ENCODE measurements at regions of chr1 and their contacts with region 1.

Region 1: GRCh38 chr1:167220537-167221125 is at the start of gene POU2F1:
- DNase-seq: peak; percentile 99
- H3K4me3 Mint-ChIP-seq: peak within 1 kb of the TSS; percentile 99
- H3K27ac Mint-ChIP-seq: peak within 1 kb of the TSS; percentile 99
- H3K4me1 Mint-ChIP-seq: peaks cover 37% of the 10 kb centered on the region
- H3K27me3 Mint-ChIP-seq: peaks cover 2% of the 10 kb centered on the region
- total RNA-seq, gene POU2F1: 17.6 to 19.4 TPM

Region 2: DNA sequence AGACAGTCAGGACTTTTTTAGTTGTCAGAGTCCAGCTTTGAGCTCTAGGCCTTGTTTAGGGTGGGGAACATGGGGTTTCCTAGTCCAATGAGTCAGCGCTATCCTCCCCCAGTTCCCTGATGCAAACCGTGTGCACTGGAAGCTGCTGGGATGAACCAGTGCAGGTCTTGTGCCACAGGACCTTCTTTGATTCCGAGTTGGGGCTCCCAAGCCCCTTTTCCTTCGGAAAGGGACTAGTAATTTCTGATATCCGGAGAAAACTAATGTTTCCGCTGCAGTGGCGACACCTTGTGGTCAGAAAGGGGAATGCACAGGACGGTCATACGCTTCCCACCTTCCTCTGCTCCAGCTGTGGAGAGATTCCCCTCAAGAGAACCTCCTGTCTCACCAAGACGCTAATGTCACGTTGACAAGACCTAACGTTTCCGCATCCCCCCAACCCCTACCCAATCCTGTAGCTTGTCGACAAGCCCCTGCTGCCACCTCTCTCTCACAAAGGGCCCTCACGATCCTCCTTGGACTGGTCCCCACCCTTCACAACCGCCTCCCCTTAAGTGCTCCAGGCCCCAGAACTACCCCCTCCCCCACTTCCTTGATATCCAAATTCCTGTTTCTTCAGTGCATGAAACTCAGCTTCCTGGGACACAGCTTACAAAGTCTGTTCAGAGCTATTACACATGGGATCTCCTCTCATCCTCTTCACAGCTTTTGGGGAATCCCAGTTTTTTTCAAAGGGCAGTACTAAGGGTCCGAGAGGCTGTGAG is 161.4 kb before region 1 on chr1:
- CTCF ChIA-PET with region 1: interaction called, 11 read pairs
- intact Hi-C with region 1: no loop called
- DNase-seq: peak; percentile 89
- H3K4me3 Mint-ChIP-seq: no peak overlapping the region
- H3K27ac Mint-ChIP-seq: peak overlapping the region; percentile 38
- H3K4me1 Mint-ChIP-seq: peaks cover 11% of the 10 kb centered on the region
- H3K27me3 Mint-ChIP-seq: no peaks in the 10 kb centered on the region

Region 3: GRCh38 chr1:167121375-167122120 is 99.1 kb before region 1 on chr1:
- CTCF ChIA-PET with region 1: interaction called, 18 read pairs
- intact Hi-C with region 1: loop called (anchors 1 kb)
- DNase-seq: peak; percentile 58
- H3K4me3 Mint-ChIP-seq: peak overlapping the region; percentile 81
- H3K27ac Mint-ChIP-seq: no peak overlapping the region
- H3K4me1 Mint-ChIP-seq: peaks cover 3% of the 10 kb centered on the region
- H3K27me3 Mint-ChIP-seq: peaks cover 2% of the 10 kb centered on the region

Region 4: DNA sequence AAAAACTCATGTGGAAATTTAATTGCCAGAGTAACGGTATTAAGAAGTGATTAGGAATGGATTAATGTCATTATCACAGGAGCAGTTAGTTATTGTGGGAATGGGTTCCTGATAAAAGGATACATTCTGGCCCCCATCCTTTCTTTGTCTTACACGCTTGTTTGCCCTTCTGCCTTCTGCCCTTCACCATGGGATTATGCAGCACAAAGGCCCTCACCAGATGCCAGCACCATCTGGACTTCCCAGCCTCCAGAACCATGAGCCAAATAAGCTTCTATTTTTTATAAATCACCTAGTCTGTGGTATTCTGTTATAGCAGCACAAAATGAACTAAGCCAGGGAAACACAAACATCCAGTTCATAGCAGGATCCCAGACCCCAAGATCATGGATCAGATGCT is 33.9 kb before region 1 on chr1:
- CTCF ChIA-PET with region 1: no interaction called
- intact Hi-C with region 1: no loop called
- DNase-seq: no peak
- H3K4me3 Mint-ChIP-seq: no peak overlapping the region
- H3K27ac Mint-ChIP-seq: no peak overlapping the region
- H3K4me1 Mint-ChIP-seq: no peaks in the 10 kb centered on the region
- H3K27me3 Mint-ChIP-seq: no peaks in the 10 kb centered on the region

Region 5: GRCh38 chr1:167447521-167448136 is 227.0 kb after region 1 on chr1:
- CTCF ChIA-PET with region 1: interaction called, 5 read pairs
- intact Hi-C with region 1: loop called (anchors 1 kb)
- DNase-seq: peak; percentile 93
- H3K4me3 Mint-ChIP-seq: peak overlapping the region; percentile 53
- H3K27ac Mint-ChIP-seq: peak overlapping the region; percentile 91
- H3K4me1 Mint-ChIP-seq: peaks cover 76% of the 10 kb centered on the region
- H3K27me3 Mint-ChIP-seq: no peaks in the 10 kb centered on the region

Region 6: DNA sequence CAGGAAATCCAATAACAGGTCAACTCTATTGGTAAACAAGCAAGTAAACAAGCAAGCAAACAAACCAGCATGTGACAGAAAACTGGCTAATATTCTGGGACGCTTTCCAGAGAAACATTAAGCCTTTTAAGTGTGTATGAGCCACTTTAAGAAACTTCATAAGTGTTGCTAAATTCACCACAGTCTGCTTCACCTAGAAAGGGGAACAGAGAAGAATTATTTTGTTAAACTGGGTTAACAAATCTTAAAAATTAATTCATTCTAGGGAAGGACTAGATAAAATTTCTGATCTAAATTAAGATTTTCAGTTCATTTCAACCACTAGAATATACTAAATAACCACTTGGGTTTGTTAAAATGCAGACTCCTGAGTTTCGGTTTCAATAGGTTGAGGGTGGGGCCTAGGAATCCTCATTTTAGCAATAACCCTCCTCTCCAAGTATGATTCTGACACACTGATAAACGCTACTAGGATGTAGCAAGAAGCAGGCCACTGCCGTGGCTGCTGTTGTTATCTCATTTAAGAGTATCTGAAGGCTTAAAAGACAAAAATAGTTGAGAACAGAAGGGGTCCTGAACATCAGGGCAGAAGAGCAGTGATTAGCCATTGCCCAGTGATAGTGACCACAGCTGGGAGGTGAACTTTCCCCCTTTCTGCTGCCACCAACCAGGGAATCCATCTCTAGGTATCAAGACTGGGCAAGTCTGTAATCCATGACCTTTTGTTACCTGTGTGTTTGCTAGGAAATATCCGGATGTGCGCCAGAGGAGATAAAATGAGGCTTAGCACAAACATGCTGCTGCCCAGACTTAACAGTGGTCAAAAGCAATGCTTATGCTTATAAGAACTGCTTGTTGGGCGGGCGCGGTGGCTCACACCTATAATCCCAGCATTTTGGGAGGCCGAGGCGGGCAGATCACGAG is 321.7 kb after region 1 on chr1:
- CTCF ChIA-PET with region 1: interaction called, 12 read pairs
- intact Hi-C with region 1: no loop called
- DNase-seq: no peak
- H3K4me3 Mint-ChIP-seq: no peak overlapping the region
- H3K27ac Mint-ChIP-seq: no peak overlapping the region
- H3K4me1 Mint-ChIP-seq: peaks cover 34% of the 10 kb centered on the region
- H3K27me3 Mint-ChIP-seq: no peaks in the 10 kb centered on the region

Region 7: DNA sequence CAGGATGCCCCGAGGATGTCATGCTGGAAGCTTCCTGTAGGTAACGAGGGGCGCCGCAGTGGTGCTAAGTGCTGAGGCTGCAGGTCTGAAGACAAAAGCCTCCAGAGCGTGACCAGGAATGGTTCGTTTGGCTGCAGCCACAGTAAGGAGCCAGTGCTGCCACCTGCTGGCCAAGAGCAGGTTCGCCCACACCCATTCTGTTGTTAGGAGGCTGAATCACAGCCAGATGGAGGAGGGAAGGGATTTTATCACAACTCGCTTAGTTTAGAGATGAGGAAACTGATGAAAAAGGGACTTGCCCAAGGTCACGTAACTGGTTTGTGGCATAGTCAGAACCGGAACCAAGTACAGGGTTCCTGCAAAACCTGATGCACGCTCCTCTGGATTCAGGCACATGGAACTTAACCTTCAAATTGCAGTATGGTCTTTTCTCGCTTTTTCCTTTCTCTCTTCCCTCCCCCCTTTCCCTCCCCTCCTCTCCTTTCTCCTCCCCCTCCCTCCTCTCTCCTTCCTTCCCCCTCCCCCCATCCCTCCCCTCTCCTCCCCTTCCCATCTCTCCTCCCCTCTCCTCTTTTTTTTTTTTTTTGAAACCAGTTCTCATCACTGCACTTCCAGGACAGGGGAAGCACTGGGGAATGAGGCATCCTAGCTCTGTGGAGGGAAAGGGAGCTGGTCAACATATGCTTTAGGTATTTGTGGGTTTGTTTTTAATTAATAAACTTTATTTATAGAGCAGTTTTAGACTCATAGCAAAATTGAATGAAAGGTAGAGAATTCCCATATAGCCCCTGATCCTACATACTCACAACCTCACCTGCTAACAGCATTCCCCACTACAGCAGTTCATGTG is 583.0 kb after region 1 on chr1:
- CTCF ChIA-PET with region 1: no interaction called
- intact Hi-C with region 1: loop called (anchors 5 kb)
- DNase-seq: peak; percentile 98
- H3K4me3 Mint-ChIP-seq: peak overlapping the region; percentile 50
- H3K27ac Mint-ChIP-seq: peak overlapping the region; percentile 80
- H3K4me1 Mint-ChIP-seq: peaks cover 24% of the 10 kb centered on the region
- H3K27me3 Mint-ChIP-seq: no peaks in the 10 kb centered on the region